CD4-positive, alpha-beta T cell (primary cell): ENCODE measurements at regions of chr7 and their contacts with region 1.

Region 1: GRCh38 chr7:149714050-149714909 is 59.1 kb downstream of the ZNF467 start:
- DNase-seq: peak; percentile 84 to 97 (median 94)
- ATAC-seq: peak; percentile 91
- H3K4me3 ChIP-seq: peak overlapping the region; percentile 80
- H3K4me3 Mint-ChIP-seq: peak overlapping the region; percentile 86
- H3K27ac ChIP-seq: no peak overlapping the region
- H3K27ac Mint-ChIP-seq: peak overlapping the region; percentile 66
- H3K4me1 ChIP-seq: peaks cover 29% of the 10 kb centered on the region
- H3K4me1 Mint-ChIP-seq: peaks cover 21% of the 10 kb centered on the region
- H3K27me3 ChIP-seq: no peaks in the 10 kb centered on the region
- H3K27me3 Mint-ChIP-seq: no peaks in the 10 kb centered on the region
- CTCF ChIP-seq: no peak

Region 2: DNA sequence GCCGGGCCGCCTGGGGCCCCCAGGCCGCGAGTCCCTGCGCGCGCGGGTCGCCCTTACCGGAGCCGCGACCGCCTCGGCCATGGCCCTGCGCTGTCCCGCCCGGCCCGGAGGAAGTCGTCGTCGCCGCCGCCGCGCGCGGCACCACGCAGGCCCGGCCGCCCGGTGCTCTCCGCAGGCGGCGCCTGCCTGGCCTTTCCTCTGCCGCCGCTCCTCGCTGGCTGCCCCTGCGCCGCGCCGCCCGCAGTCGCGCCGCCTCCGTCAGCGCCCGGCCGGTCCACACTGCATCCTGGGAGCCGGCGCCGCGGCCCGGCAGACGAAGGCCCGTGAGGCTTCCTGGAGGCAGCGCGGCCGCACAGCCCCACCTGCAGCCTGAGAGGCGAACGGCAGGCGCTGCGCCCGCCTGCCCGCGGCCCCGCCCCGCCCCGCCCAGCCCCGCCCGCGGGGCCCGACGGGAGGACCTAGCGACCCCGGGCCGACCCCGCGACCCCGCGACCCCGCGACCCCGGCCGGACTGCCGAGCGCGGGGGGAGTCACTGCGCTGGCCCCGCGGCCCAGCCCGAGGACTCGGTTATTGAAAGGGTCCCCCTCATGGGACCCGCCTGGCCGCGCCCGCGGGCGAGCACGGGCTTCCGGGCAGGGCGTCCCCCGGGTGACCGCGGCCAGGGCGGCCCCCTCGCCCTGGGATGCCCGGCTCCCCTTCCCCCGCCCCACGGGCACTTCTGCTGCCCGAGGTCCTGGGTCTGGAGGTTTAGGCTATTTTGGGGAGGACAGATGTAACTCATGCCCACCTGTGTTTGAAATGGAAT is 216.6 kb before region 1 on chr7 and contains the start of gene ZNF746:
- CTCF ChIA-PET with region 1: no interaction called
- POLR2A ChIA-PET with region 1: no interaction called
- intact Hi-C with region 1: loop called in 1 of 2 experiments (anchors 10 kb)
- DNase-seq: peak; percentile 58 to 92 (median 74)
- ATAC-seq: peak; percentile 92
- H3K4me3 ChIP-seq: peak within 1 kb of the TSS; percentile 73
- H3K4me3 Mint-ChIP-seq: peak within 1 kb of the TSS; percentile 96
- H3K27ac ChIP-seq: peak within 1 kb of the TSS in 1 of 2 donors; percentile 43
- H3K27ac Mint-ChIP-seq: peak within 1 kb of the TSS; percentile 96
- H3K4me1 ChIP-seq: peaks cover 25% of the 10 kb centered on the region
- H3K4me1 Mint-ChIP-seq: peaks cover 27% of the 10 kb centered on the region
- H3K27me3 ChIP-seq: no peaks in the 10 kb centered on the region
- H3K27me3 Mint-ChIP-seq: no peaks in the 10 kb centered on the region
- CTCF ChIP-seq: peak; percentile 27
- total RNA-seq, gene ZNF746: 28.4 to 30.3 TPM

Region 3: DNA sequence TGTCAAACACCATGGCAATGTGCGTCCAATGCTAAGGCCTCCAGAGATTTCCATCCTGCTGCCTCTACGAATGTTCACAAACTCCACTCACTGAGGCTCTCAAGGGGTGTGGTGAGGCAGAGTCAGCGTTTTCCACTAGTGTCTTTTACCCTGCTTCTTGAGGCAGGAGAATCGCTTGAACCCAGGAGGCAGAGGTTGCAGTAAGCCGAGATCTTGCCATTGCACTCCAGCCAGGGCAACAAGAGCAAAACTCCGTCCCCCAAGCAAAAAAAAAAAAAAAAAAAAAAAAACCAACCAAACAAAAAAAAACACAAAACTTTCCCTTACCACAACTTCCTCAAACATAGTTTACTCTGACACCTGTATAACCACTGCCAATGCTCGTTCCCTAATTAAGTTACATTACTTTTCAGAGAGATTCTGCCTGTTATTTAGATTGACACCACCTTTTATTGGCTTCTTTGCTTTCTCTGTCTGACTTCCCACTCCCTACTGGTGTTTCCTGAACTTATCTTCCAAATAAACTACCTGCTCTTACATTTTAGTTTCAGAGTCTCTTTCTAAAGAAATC is 114.6 kb before region 1 on chr7:
- CTCF ChIA-PET with region 1: no interaction called
- POLR2A ChIA-PET with region 1: no interaction called
- intact Hi-C with region 1: no loop called
- DNase-seq: peak in 3 of 14 experiments; percentile 54 to 59 (median 59)
- ATAC-seq: peak; percentile 24
- H3K4me3 ChIP-seq: no peak overlapping the region
- H3K4me3 Mint-ChIP-seq: peak overlapping the region; percentile 49
- H3K27ac ChIP-seq: no peak overlapping the region
- H3K27ac Mint-ChIP-seq: peak overlapping the region; percentile 76
- H3K4me1 ChIP-seq: peaks cover 19% of the 10 kb centered on the region
- H3K4me1 Mint-ChIP-seq: peaks cover 29% of the 10 kb centered on the region
- H3K27me3 ChIP-seq: no peaks in the 10 kb centered on the region
- H3K27me3 Mint-ChIP-seq: no peaks in the 10 kb centered on the region
- CTCF ChIP-seq: no peak

Region 4: DNA sequence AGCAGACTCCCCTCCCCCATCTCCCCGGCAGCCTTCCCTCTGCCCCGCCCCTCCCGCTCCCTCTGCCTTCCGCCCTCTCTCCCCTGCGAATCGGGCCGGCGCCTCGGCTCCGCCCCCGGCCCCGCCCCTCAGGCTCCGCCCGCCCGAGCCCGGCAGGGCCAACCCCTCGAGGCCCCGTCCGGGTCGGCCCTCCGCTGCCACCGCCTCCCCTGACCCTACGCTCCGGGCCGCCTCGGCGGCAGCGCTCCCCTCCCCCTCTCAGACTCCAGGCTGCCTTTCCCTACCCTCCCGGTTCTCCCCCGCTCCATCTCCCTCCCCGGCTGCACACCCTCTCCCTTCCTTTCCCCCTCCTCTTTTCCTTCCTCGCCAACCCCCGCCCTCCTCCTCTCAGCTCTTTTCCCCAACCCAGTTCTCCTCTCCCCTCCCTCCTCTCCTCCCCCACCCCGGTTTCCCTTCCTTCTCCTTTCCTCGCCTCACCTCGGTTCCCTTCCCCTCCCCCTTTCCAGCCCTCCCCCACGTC is 57.5 kb after region 1 on chr7:
- CTCF ChIA-PET with region 1: no interaction called
- POLR2A ChIA-PET with region 1: interaction called, 4 read pairs
- intact Hi-C with region 1: loop called (anchors 1 to 5 kb)
- DNase-seq: peak; percentile 73 to 93 (median 86)
- ATAC-seq: peak; percentile 87
- H3K4me3 ChIP-seq: peak overlapping the region; percentile 67
- H3K4me3 Mint-ChIP-seq: peak overlapping the region; percentile 84
- H3K27ac ChIP-seq: no peak overlapping the region
- H3K27ac Mint-ChIP-seq: no peak overlapping the region
- H3K4me1 ChIP-seq: peaks cover 31% of the 10 kb centered on the region
- H3K4me1 Mint-ChIP-seq: peaks cover 20% of the 10 kb centered on the region
- H3K27me3 ChIP-seq: no peaks in the 10 kb centered on the region
- H3K27me3 Mint-ChIP-seq: no peaks in the 10 kb centered on the region
- CTCF ChIP-seq: no peak

Region 5: GRCh38 chr7:149873074-149873969 is 159.0 kb after region 1 on chr7 and contains the start of gene ATP6V0E2:
- CTCF ChIA-PET with region 1: no interaction called
- POLR2A ChIA-PET with region 1: no interaction called
- intact Hi-C with region 1: loop called in 1 of 2 experiments (anchors 5 kb)
- DNase-seq: peak; percentile 82 to 96 (median 90)
- ATAC-seq: peak; percentile 66
- H3K4me3 ChIP-seq: peak within 1 kb of the TSS; percentile 75
- H3K4me3 Mint-ChIP-seq: peak within 1 kb of the TSS; percentile 95
- H3K27ac ChIP-seq: peak within 1 kb of the TSS; percentile 37 to 77
- H3K27ac Mint-ChIP-seq: peak within 1 kb of the TSS; percentile 92
- H3K4me1 ChIP-seq: peaks cover 78% of the 10 kb centered on the region
- H3K4me1 Mint-ChIP-seq: peaks cover 80% of the 10 kb centered on the region
- H3K27me3 ChIP-seq: no peaks in the 10 kb centered on the region
- H3K27me3 Mint-ChIP-seq: no peaks in the 10 kb centered on the region
- CTCF ChIP-seq: no peak
- total RNA-seq, gene ATP6V0E2: 23.2 to 24.9 TPM

Region 6: GRCh38 chr7:150378853-150379440 is 664.7 kb after region 1 on chr7 and contains the start of gene ZNF775:
- CTCF ChIA-PET with region 1: no interaction called
- POLR2A ChIA-PET with region 1: no interaction called
- intact Hi-C with region 1: loop called in 1 of 2 experiments (anchors 5 kb)
- DNase-seq: peak; percentile 80 to 95 (median 90)
- ATAC-seq: peak; percentile 94
- H3K4me3 ChIP-seq: peak within 1 kb of the TSS; percentile 85
- H3K4me3 Mint-ChIP-seq: peak within 1 kb of the TSS; percentile 90
- H3K27ac ChIP-seq: peak within 1 kb of the TSS; percentile 54 to 55
- H3K27ac Mint-ChIP-seq: peak within 1 kb of the TSS; percentile 84
- H3K4me1 ChIP-seq: peaks cover 46% of the 10 kb centered on the region
- H3K4me1 Mint-ChIP-seq: peaks cover 65% of the 10 kb centered on the region
- H3K27me3 ChIP-seq: no peaks in the 10 kb centered on the region
- H3K27me3 Mint-ChIP-seq: no peaks in the 10 kb centered on the region
- CTCF ChIP-seq: no peak
- total RNA-seq, gene ZNF775: 0.38 to 0.45 TPM

Region 7: GRCh38 chr7:151057989-151058780 is 1343.9 kb after region 1 on chr7:
- CTCF ChIA-PET with region 1: no interaction called
- POLR2A ChIA-PET with region 1: no interaction called
- intact Hi-C with region 1: loop called in 1 of 2 experiments (anchors 10 kb)
- DNase-seq: peak; percentile 92 to 100 (median 96)
- ATAC-seq: peak; percentile 94
- H3K4me3 ChIP-seq: peak overlapping the region; percentile 89
- H3K4me3 Mint-ChIP-seq: peak overlapping the region; percentile 96
- H3K27ac ChIP-seq: peak overlapping the region; percentile 69 to 71
- H3K27ac Mint-ChIP-seq: peak overlapping the region; percentile 91
- H3K4me1 ChIP-seq: peaks cover 49% of the 10 kb centered on the region
- H3K4me1 Mint-ChIP-seq: peaks cover 42% of the 10 kb centered on the region
- H3K27me3 ChIP-seq: no peaks in the 10 kb centered on the region
- H3K27me3 Mint-ChIP-seq: no peaks in the 10 kb centered on the region
- CTCF ChIP-seq: no peak

Region 8: DNA sequence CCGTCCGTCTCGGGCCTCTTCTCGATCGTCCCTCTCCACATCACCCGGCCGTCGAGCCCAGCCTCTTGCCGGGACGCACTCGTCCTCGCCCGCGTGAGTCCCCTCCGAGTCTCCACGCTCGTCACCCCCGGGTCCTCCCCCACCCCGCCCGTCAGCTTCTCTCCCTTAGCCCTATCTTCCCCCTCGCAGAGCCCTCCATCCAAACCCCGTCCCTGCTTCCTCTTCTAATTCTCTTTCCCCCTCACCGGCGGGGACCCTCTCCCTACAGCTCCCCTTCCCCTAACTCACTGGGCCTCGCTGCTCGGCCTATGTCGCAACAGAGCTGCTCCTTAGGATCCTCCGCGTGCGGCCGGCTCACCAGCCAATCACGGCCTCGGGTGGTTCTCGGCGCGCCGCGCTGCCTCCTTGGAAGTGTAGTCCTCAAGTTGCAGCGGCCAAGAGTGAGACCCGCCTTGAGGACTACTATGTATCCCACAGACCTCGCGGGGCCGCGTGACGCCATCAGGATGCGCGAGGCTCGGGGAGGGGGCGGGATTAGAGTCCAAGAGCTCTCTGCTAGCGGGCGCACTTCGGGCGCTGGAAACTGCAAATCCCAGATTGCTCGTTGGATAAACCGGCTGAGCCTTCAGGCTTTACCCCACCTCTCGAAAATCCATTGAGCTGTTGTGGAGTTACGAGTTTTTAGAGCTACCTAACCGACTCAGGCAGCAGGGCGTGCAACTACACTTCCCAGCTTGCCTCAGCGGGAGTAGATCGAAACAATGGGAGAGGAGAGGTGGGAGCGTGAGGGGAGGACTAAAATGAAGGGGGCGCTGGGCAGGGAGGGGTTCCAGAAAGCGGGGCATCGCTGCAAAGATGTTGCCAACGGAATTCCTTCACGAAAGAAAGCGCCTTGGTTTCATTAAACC is 1512.8 kb after region 1 on chr7 and contains the start of gene ABCF2:
- CTCF ChIA-PET with region 1: no interaction called
- POLR2A ChIA-PET with region 1: no interaction called
- intact Hi-C with region 1: loop called in 1 of 2 experiments (anchors 5 kb)
- DNase-seq: peak; percentile 93 to 99 (median 97)
- ATAC-seq: peak; percentile 99
- H3K4me3 ChIP-seq: peak within 1 kb of the TSS; percentile 90
- H3K4me3 Mint-ChIP-seq: peak within 1 kb of the TSS; percentile 99
- H3K27ac ChIP-seq: peak within 1 kb of the TSS; percentile 63 to 71
- H3K27ac Mint-ChIP-seq: peak within 1 kb of the TSS; percentile 90
- H3K4me1 ChIP-seq: peaks cover 38% of the 10 kb centered on the region
- H3K4me1 Mint-ChIP-seq: peaks cover 41% of the 10 kb centered on the region
- H3K27me3 ChIP-seq: no peaks in the 10 kb centered on the region
- H3K27me3 Mint-ChIP-seq: no peaks in the 10 kb centered on the region
- CTCF ChIP-seq: no peak
- total RNA-seq, gene ABCF2: 12.3 to 13.2 TPM